Activated CD4-positive, alpha-beta T cell treated with anti-CD3 and anti-CD28 coated beads, Interleukin-2, amount 10 ng/mL, durations not matched to agents 7 days and 5 days (primary cell): ENCODE measurements at regions of chr6 and their contacts with region 1.

Region 1: GRCh38 chr6:130885392-130886192 is 58.4 kb downstream of the SMLR1 start:
- DNase-seq: peak; percentile 85
- H3K4me3 Mint-ChIP-seq: no peak overlapping the region
- H3K27ac Mint-ChIP-seq: no peak overlapping the region
- H3K4me1 Mint-ChIP-seq: no peaks in the 10 kb centered on the region
- H3K27me3 Mint-ChIP-seq: no peaks in the 10 kb centered on the region

Region 2: DNA sequence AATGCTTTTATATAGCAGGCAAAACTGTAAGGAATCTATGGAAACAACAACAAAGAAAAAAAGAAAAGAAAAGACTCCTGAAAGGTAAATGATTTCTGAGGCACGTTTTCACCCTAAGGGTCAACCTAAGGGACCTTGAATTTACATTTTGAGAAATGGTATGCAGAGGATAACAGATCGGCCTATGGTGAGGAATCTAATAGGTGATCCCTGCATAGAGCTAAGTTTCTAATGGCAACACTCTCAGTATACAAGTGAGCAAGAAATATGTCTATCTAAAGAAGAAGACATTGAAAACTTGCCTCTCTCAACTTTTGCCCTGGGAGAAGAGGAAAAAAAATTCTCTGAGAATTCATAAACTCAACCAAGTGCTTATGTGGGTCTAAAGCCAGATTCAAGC is 230.7 kb after region 1 on chr6:
- CTCF ChIA-PET with region 1: interaction called, 11 read pairs
- POLR2A ChIA-PET with region 1: no interaction called
- DNase-seq: no peak
- H3K4me3 Mint-ChIP-seq: no peak overlapping the region
- H3K27ac Mint-ChIP-seq: no peak overlapping the region
- H3K4me1 Mint-ChIP-seq: peaks cover 3% of the 10 kb centered on the region
- H3K27me3 Mint-ChIP-seq: no peaks in the 10 kb centered on the region